Pancreas (tissue), 10 donors: ENCODE measurements at regions of chr7 and their contacts with region 1.

Region 1: DNA sequence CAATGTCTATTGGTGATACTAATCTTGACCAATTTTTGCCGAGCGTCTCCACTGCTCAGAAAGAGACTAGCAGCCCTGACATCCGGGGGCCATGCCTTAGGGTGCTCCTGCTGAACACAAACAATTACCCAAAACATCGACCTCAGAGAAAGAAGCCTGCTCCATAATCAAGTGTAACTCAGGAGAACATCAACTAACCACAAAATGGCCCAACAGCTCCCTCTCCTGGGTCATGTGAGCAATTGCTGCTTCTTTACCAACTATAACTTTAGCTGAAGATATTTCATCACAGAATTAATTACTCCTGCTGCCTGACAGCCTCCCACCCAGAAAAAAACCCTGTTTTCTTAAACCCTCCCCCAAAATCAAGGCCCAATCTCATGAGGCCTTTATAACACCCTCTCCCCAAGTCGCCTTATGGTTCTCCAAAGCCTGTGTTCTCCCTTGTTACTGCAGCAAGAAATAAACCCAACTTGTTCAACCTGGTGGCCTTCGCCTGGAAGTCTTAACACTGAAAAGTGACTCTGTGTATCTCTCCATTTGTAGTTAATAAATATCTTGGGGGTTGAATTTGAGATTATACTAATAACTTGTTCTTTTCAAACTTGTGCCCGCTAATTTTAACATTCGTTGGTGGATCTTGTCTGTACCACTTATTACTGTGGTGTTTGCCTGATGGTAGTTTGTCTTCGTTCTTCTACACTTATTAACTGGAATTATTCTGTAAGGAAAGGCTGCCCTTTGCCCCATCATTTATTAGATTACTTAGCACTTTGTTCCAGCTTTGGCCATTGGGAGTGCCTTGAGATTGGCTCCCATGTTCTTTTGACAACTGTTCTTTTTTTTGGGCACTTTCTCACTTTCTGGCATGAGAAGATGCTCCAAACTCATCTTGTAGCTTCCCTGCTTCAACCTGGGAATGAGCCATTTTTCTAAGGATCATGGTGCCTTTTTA is 21.2 kb upstream of the RAMP3 start:
- DNase-seq: peak in 3 of 6 donors; percentile 21 to 63 (median 30)
- ATAC-seq: peak; percentile 80 to 97 (median 94)
- H3K4me3 ChIP-seq: no peak overlapping the region
- H3K27ac ChIP-seq: no peak overlapping the region
- H3K4me1 ChIP-seq: no peaks in the 10 kb centered on the region
- H3K27me3 ChIP-seq: no peaks in the 10 kb centered on the region
- CTCF ChIP-seq: peak; percentile 65 to 71 (median 66)

Region 2: DNA sequence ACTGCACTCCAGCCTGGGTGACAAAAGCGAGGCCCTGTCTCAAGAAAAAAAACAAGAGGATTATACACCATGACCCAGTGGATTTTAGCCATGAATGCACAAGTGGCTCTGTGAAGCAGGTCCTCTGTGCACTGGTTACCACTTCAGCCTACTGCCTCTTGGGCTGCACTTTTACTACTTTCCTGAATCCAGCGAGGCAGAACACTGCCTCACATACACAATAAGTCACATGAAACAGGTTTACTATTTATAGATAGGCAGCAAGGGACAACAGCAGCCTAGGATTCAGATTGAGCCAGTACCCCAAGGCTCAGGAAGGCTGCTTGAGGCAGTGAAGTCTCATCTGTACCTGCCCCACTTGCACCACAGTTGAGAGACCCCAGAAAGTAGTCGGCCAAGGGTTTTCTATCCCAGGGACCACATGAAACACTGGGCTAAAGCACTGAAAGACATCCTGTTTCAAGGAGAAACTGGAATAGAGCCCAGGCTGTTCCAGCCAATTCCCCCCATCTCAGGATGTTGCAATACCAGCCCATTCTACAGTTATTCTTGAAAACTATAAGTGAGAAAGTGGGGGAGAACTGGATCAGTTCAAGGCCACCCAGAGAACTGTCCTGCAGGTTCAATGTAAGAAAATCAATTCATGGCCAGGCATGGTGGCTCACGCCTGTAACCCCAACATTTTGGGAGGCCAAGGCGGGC is 540.3 kb before region 1 on chr7:
- intact Hi-C with region 1: loop called in 1 of 3 experiments (anchors 10 kb)
- DNase-seq: no peak
- ATAC-seq: no peak
- H3K4me3 ChIP-seq: no peak overlapping the region
- H3K27ac ChIP-seq: no peak overlapping the region
- H3K4me1 ChIP-seq: no peaks in the 10 kb centered on the region
- H3K27me3 ChIP-seq: no peaks in the 10 kb centered on the region
- CTCF ChIP-seq: no peak

Region 3: DNA sequence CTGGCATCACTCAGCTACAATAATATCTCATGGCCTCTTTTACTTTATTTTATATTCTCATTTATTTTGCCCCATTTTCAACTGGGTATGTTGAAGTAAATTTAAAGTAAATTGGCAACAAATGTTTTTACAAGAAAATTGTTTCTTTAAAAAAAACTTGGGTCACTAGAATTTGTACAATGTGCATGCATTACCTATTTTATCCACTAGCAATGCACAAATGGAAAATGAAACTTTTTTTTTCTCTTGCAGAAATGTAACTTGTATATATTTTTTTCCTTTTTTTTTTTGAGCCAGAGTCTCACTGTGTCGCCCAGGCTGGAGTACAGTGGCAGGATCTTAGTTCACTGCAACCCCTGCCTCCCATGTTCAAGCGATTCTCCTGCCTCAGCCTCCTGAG is 278.2 kb before region 1 on chr7:
- intact Hi-C with region 1: loop called in 1 of 3 experiments (anchors 10 kb)
- DNase-seq: no peak
- ATAC-seq: no peak
- H3K4me3 ChIP-seq: no peak overlapping the region
- H3K27ac ChIP-seq: no peak overlapping the region
- H3K4me1 ChIP-seq: no peaks in the 10 kb centered on the region
- H3K27me3 ChIP-seq: no peaks in the 10 kb centered on the region
- CTCF ChIP-seq: no peak

Region 4: GRCh38 chr7:44967571-44968446 is 168.6 kb before region 1 on chr7:
- intact Hi-C with region 1: loop called in 2 of 3 experiments (anchors 2 to 10 kb)
- DNase-seq: peak in 2 of 6 donors; percentile 43 to 50
- ATAC-seq: peak in 3 of 4 donors; percentile 25 to 77 (median 55)
- H3K4me3 ChIP-seq: no peak overlapping the region
- H3K27ac ChIP-seq: no peak overlapping the region
- H3K4me1 ChIP-seq: peaks cover 0 to 2% (median 0%) of the 10 kb centered on the region in 3 donors
- H3K27me3 ChIP-seq: peaks cover 0 to under 1% (median 0%) of the 10 kb centered on the region in 4 donors
- CTCF ChIP-seq: no peak

Region 5: DNA sequence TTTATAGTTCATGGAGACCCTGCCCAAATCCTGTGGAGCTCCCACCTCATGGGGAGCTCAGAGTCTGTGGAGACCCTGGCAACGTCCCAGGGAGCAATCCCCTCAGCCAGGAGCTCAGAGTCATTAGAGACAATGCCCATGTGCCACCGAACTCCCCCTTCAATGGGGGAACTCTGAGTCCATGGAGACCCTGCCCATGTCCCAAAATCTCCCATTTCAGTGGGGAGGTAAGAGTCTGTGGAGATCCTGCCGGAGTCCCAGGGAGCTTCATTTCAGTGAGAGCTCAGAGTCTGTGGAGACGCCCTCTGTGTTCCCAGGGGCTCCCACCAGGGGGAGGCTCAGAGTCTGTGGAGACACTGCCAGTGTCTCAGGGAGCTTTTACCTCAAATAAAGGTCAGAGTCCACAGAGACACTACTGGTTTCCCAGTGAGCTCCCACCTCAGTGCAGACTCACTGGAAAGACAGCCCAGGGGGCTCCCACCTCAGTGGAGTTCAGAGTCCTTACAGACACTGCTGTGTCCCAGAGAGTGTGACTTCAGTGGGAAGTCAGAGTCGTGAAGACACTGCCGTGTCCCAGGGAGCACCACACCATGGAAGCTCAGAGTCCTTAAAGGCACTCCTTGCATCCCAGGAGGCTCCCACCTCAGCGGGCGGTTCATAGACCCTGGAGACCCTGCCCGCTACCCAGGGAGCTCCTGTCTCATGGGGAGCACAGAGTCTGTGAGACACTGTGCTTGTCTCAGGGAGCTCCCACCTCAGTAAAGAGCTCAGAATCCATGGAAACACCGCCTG is 162.6 kb before region 1 on chr7:
- intact Hi-C with region 1: loop called in 2 of 3 experiments (anchors 2 to 10 kb)
- DNase-seq: peak in 4 of 6 donors; percentile 27 to 77 (median 52)
- ATAC-seq: peak; percentile 44 to 86 (median 70)
- H3K4me3 ChIP-seq: no peak overlapping the region
- H3K27ac ChIP-seq: no peak overlapping the region
- H3K4me1 ChIP-seq: no peaks in the 10 kb centered on the region
- H3K27me3 ChIP-seq: no peaks in the 10 kb centered on the region
- CTCF ChIP-seq: peak in 3 of 4 donors; percentile 21 to 33 (median 30)